K562 (cell line): ENCODE measurements at regions of chr11 and their contacts with region 1.

Region 1: GRCh38 chr11:63855975-63856749 is 17.3 kb downstream of the MARK2 start:
- DNase-seq: no peak
- ATAC-seq: peak; percentile 43; the same call in 1 of the 3 replicates
- H3K4me3 ChIP-seq: no peak overlapping the region
- H3K27ac ChIP-seq: no peak overlapping the region
- H3K4me1 ChIP-seq: peaks cover 11 to 18% of the 10 kb centered on the region in 2 experiments; a peak in 4 of 5 replicates
- H3K27me3 ChIP-seq: no peaks in the 10 kb centered on the region
- CTCF ChIP-seq: no peak
- EP300 ChIP-seq: no peak
- POLR2A ChIP-seq: no peak
- RAD21 ChIP-seq: no peak

Region 2: GRCh38 chr11:63845303-63845702 is 10.9 kb before region 1 on chr11:
- CTCF ChIA-PET with region 1: no interaction called
- POLR2A ChIA-PET with region 1: interaction called, 10 read pairs
- in situ Hi-C with region 1: no loop called
- intact Hi-C with region 1: no loop called
- DNase-seq: peak in 1 of 4 experiments; percentile 40
- ATAC-seq: peak; percentile 35; the same call in 2 of the 3 replicates
- H3K4me3 ChIP-seq: no peak overlapping the region
- H3K27ac ChIP-seq: 0 out of 3 replicates have a peak overlapping the region, but pooled peaks have one; percentile 17
- H3K4me1 ChIP-seq: peaks cover 18 to 34% of the 10 kb centered on the region in 2 experiments; a peak in 4 of 5 replicates
- H3K27me3 ChIP-seq: no peaks in the 10 kb centered on the region
- CTCF ChIP-seq: no peak
- EP300 ChIP-seq: no peak
- POLR2A ChIP-seq: no peak
- RAD21 ChIP-seq: no peak